Heart left ventricle (tissue), 16 donors: ENCODE measurements at regions of chr9 and their contacts with region 1.

Region 1: DNA sequence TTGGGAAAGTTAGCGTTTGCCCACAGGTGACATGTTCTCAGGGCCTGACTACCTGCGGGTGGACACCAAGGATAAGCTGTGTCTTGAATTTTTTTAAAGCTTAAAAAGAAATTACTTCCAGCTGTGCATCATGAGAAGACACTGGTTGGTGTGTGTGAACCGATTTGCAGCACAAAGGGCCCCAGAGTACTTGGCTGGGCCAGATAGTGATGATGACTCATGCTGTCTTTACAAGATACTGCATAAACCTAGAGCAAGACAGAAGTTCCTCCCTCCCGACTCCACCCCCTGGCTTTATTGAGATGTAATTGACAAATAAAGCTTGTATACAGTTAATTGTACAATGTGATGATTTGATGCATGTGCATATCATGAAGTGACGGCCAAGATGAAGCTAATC is 212.8 kb downstream of the NXNL2 start:
- DNase-seq: peak in 2 of 5 donors; percentile 52 to 57
- ATAC-seq: peak in 3 of 4 donors; percentile 76 to 85 (median 81)
- H3K4me3 ChIP-seq: no peak overlapping the region
- H3K27ac ChIP-seq: peak overlapping the region in 8 of 12 donors; percentile 51 to 79 (median 67)
- H3K4me1 ChIP-seq: peaks cover 0 to 46% (median 19%) of the 10 kb centered on the region in 12 donors
- H3K27me3 ChIP-seq: no peaks in the 10 kb centered on the region
- CTCF ChIP-seq: no peak
- POLR2A ChIP-seq: no peak

Region 2: DNA sequence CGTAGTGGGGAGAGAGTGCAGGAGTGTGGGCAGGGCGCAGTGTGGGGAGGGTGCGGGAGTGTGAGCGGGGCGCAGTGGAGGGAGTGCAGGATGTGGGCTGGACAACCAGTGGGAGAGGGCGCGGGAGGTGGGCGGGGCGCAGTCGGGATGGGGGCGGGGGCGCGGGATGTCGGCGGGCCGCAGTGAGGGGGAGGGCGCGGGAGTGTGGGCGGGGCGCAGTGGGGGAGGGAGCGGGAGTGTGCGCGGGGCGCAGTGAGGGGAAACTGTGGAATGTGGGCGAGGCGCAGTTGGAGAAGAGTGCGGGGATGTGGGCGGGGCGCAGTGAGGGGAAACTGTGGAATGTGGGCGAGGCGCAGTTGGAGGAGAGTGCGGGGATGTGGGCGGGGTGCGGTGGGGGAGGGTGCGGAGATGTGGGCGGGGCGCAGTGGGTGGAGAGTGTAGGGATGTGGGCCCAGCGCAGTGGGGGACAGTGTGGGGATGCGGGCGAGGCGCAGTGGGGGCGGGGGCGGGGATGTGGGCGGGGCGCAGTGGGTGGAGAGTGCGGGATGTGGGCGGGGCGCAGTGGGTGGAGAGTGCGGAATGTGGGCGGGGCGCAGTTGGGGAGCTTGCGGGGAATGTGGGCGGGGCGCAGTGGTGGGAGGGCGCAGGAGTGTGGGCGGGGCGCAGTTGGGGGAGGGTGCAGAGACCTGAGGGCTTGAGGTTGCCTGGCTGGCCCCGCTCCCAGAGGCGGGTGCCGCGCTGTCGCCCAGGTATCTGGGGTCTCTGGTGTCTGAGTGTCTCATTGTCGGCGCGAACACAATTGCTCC is 213.1 kb before region 1 on chr9 and contains the start of gene NXNL2:
- intact Hi-C with region 1: no loop called
- DNase-seq: peak; percentile 53 to 87 (median 59)
- ATAC-seq: peak in 3 of 4 donors; percentile 66 to 78 (median 71)
- H3K4me3 ChIP-seq: peak within 1 kb of the TSS; percentile 17 to 58 (median 46)
- H3K27ac ChIP-seq: peak within 1 kb of the TSS in 6 of 12 donors; percentile 19 to 76 (median 54)
- H3K4me1 ChIP-seq: peaks cover 3 to 31% (median 11%) of the 10 kb centered on the region in 12 donors
- H3K27me3 ChIP-seq: peaks cover 0 to 44% (median 20%) of the 10 kb centered on the region in 9 donors
- CTCF ChIP-seq: no peak
- POLR2A ChIP-seq: no peak
- total RNA-seq, gene NXNL2: not detected

Region 3: DNA sequence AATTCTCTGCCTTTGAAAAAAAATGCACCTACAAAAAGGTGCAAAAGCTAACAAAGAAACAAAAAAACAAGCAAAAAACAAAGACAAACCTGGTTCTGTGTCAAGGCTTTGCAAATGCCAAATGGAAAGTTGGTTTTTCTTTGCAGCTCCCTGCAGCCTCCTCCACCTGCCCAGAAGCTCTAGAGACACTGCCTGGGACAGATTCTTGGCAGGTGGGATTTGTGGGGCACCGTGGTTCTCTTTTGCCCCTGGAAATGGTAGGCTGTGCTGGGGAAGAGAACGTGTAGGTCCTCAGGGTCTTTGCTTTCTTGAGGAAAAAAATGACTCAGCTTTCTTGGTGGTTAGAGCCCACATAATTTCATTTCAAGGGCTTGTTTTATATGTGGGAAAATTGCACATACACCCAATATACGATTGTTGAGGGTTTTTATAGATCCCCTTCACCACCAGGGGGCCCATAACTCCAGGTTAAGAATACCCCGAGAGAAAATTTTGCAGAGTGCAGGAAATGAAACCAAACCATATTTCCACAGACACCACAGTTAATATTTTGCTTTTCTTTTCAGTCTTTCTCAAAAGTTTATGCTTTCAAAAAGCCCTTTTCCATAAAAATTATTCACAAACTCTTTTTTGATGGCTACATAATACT is 154.1 kb before region 1 on chr9:
- intact Hi-C with region 1: loop called in 1 of 10 experiments (anchors 10 kb)
- DNase-seq: peak in 3 of 5 donors; percentile 59 to 66 (median 62)
- ATAC-seq: peak in 3 of 4 donors; percentile 68 to 76 (median 71)
- H3K4me3 ChIP-seq: no peak overlapping the region
- H3K27ac ChIP-seq: no peak overlapping the region
- H3K4me1 ChIP-seq: peaks cover 0 to 4% (median 0%) of the 10 kb centered on the region in 12 donors
- H3K27me3 ChIP-seq: no peaks in the 10 kb centered on the region
- CTCF ChIP-seq: peak; percentile 51 to 79 (median 70)
- POLR2A ChIP-seq: no peak

Region 4: GRCh38 chr9:88932766-88933165 is 185.0 kb after region 1 on chr9:
- intact Hi-C with region 1: no loop called
- DNase-seq: no peak
- ATAC-seq: no peak
- H3K4me3 ChIP-seq: no peak overlapping the region
- H3K27ac ChIP-seq: no peak overlapping the region
- H3K4me1 ChIP-seq: peaks cover 0 to 17% (median 0%) of the 10 kb centered on the region in 12 donors
- H3K27me3 ChIP-seq: no peaks in the 10 kb centered on the region
- CTCF ChIP-seq: no peak
- POLR2A ChIP-seq: no peak

Region 5: DNA sequence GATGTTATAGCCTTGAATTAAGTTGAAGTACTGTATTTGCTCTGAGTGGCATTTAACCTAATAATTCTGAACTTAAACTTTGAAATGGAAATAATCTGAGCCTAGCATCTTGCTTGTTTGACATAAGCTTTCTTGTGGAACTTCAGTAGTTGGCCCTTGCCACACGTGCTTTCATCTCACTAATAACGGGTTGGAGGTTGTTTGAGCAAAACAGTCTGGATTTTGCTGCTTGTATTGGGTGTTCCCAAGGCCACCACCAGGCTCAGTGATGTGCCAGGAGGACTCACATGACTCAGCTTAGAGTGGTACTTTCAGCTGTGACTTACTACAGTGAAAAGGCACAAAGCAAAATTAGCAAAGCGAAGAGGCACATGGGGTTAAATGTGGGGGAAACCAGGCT is 606.2 kb after region 1 on chr9:
- intact Hi-C with region 1: no loop called
- DNase-seq: no peak
- ATAC-seq: peak in 1 of 4 donors; percentile 38
- H3K4me3 ChIP-seq: no peak overlapping the region
- H3K27ac ChIP-seq: no peak overlapping the region
- H3K4me1 ChIP-seq: peaks cover 0 to 39% (median 11%) of the 10 kb centered on the region in 12 donors
- H3K27me3 ChIP-seq: no peaks in the 10 kb centered on the region
- CTCF ChIP-seq: no peak
- POLR2A ChIP-seq: no peak